Cardiac septum (tissue), 1 donor: ENCODE measurements at regions of chr1 and their contacts with region 1.

Region 1: DNA sequence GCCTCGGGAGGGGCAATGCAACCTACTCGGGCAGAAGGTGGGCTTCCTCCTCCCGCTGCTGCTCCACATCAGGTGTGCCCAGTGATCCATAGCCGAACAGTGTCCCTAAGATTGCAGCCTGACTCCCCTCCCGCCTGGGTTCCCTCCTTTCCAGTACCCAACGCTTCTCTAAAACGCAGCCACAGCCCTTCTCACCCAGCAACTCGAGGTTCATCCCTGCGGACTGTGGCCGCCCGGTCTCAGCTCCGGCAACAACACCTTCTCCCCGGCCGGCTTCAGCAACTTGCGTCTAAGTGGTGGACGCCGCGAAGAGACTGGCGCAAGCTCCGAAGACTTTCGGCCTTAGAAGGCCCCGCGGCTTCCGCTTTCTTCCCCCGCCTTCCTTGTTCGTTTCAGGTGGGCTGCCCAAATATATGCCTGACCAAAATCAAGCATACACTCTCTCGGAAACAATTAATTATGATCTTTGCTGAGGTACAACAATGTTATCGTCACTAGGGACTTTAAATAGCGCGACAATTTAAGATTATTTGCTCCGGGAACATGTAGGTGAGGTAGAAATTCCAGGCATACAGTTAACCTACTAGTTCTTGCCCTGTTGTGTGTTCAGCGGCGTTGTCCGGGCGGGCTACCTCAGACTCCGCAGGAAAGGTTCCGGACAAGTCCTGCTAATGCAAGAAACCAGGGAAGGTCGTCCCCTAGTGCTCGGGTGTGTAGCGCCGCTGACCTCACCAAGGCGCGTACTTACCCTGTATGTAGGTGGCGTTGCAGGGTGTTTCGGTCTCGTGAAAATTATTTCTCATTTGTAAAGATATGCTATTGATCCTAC is at the start of gene RBBP5:
- DNase-seq: peak; percentile 97
- total RNA-seq, gene RBBP5: 10.1 TPM

Region 2: DNA sequence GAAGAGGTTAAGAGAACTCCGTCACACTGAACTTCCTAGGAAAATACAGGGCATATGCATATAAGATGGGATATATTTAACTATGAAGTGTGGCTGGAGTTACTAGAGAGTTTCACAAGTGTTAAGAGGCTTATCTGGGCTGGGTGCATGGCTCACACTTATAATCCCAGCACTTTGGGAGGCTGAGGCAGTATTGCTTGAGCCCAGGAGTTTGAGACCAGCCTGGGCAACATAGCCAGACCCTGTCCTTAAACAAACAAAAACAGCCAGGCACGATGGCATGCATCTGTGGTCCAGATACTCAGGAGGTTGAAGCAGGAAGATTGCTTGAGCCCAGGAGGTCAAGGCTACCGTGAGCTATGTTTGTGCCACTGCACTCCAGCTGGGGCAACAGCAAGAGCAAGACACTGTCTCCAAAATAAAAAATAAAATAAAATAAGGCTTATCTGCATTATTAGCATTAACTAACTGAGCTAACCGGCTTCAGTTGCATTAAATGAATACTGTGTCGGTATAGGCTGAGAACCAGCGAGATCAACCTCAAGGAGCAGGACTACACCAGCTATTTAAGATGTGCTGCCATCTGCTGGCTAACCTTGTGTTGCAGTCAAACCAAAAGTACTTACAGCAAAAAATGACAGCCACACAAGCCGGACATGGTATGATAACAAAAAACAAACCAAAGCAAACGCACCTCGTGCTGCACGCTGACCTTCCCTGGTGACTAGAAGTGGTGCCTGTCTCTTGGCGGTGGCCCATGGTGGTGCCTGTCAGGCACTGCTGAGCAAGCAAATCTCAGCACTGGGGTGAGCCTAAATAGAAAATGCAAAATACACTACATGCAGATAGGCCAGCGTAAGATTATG is 19.6 kb after region 1 on chr1:
- intact Hi-C with region 1: loop called (anchors 2 kb)
- DNase-seq: no peak

Region 3: DNA sequence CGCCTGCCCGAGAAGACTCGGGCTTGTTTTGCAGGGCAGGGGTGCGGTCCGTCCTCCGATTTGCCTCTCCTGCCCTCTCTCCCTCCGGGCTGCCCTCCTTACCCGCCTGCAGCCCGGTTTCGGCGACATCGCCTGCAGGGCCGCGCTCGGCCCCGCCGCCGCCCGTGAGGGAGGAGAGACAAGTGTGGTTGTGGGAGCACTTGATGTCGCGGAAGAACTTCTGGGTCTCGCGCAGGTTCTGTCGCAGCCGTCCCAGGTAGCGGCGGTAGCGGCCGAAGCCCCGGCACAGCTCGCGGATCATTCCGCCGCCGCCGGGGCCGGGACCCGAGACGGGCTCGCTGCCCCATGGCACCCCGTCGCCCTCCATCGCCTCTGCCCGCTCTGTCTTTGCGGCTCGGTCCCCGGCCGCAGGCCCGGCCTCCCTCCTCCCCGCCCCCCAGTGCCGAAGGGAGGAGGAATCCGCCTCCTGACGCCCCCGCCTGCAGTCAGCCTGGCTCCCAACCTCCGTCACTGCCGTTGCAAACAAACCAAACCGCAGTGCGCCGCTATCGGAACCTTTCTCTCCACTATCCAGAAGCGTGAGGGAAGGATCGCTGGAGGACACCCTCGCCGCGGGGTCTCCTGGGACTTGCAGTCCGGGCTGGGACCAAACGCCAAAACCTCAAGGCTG is 89.4 kb after region 1 on chr1 and contains the start of gene DSTYK:
- intact Hi-C with region 1: loop called (anchors 5 kb)
- DNase-seq: peak; percentile 97
- total RNA-seq, gene DSTYK: 7.3 TPM

Region 4: GRCh38 chr1:205227584-205228006 is 105.7 kb after region 1 on chr1 and contains the start of gene TMCC2:
- intact Hi-C with region 1: loop called (anchors 1 kb)
- DNase-seq: peak; percentile 92
- total RNA-seq, gene TMCC2: 4.0 TPM

Region 5: GRCh38 chr1:205396967-205397616 is 275.2 kb after region 1 on chr1:
- intact Hi-C with region 1: no loop called
- DNase-seq: no peak